Sigmoid colon (tissue), 7 donors: ENCODE measurements at regions of chr2 and their contacts with region 1.

Region 1: GRCh38 chr2:88165332-88166003 is 4.7 kb upstream of the THNSL2 start:
- DNase-seq: no peak
- H3K4me3 ChIP-seq: no peak overlapping the region
- H3K27ac ChIP-seq: peak overlapping the region; percentile 62 to 86 (median 82)
- H3K4me1 ChIP-seq: peaks cover 0 to 36% (median 14%) of the 10 kb centered on the region in 4 donors
- H3K27me3 ChIP-seq: no peaks in the 10 kb centered on the region
- CTCF ChIP-seq: no peak
- EP300 ChIP-seq: peak in 2 of 4 donors; percentile 25 to 62
- POLR2A ChIP-seq: no peak

Region 2: GRCh38 chr2:88247531-88247930 is 82.1 kb after region 1 on chr2:
- intact Hi-C with region 1: no loop called
- DNase-seq: no peak
- H3K4me3 ChIP-seq: no peak overlapping the region
- H3K27ac ChIP-seq: no peak overlapping the region
- H3K4me1 ChIP-seq: no peaks in the 10 kb centered on the region
- H3K27me3 ChIP-seq: no peaks in the 10 kb centered on the region
- CTCF ChIP-seq: no peak
- EP300 ChIP-seq: no peak
- POLR2A ChIP-seq: no peak

Region 3: GRCh38 chr2:88686320-88686719 is 520.9 kb after region 1 on chr2:
- intact Hi-C with region 1: loop called (anchors 5 kb)
- DNase-seq: no peak
- H3K4me3 ChIP-seq: no peak overlapping the region
- H3K27ac ChIP-seq: no peak overlapping the region
- H3K4me1 ChIP-seq: peaks cover 0 to 13% (median 9%) of the 10 kb centered on the region in 4 donors
- H3K27me3 ChIP-seq: no peaks in the 10 kb centered on the region
- CTCF ChIP-seq: no peak
- EP300 ChIP-seq: no peak
- POLR2A ChIP-seq: no peak